ENCODE measurements at regions of chr3 and their contacts with region 1.

Region 1: GRCh38 chr3:31981206-31982181 is at the starts of genes OSBPL10 and ZNF860:
- DNase-seq: peak; percentile 81
- H3K4me3 ChIP-seq: peak within 1 kb of the TSS; percentile 91
- H3K27ac ChIP-seq: peak within 1 kb of the TSS; percentile 88
- H3K4me1 ChIP-seq: peaks cover 72% of the 10 kb centered on the region
- CTCF ChIP-seq: peak; percentile 11; the same call in 1 of the 2 replicates
- total RNA-seq, gene OSBPL10: 58.4 and 65.7 TPM in 2 replicates
- total RNA-seq, gene ZNF860: 13.8 and 20.3 TPM in 2 replicates

Region 2: GRCh38 chr3:31858439-31858838 is 123.1 kb before region 1 on chr3:
- CTCF ChIA-PET with region 1: no interaction called
- POLR2A ChIA-PET with region 1: interaction called, 3 read pairs
- intact Hi-C with region 1: loop called (anchors 2 kb)
- DNase-seq: peak; percentile 74
- H3K4me3 ChIP-seq: no peak overlapping the region
- H3K27ac ChIP-seq: peak overlapping the region; percentile 53
- H3K4me1 ChIP-seq: peaks cover 95% of the 10 kb centered on the region
- CTCF ChIP-seq: peak; percentile 72

Region 3: GRCh38 chr3:31934018-31934417 is 47.5 kb before region 1 on chr3:
- CTCF ChIA-PET with region 1: no interaction called
- POLR2A ChIA-PET with region 1: interaction called, 8 read pairs
- intact Hi-C with region 1: loop called (anchors 2 kb)
- DNase-seq: peak; percentile 66
- H3K4me3 ChIP-seq: peak overlapping the region; percentile 50
- H3K27ac ChIP-seq: peak overlapping the region; percentile 94
- H3K4me1 ChIP-seq: peaks cover 99% of the 10 kb centered on the region
- CTCF ChIP-seq: no peak

Region 4: DNA sequence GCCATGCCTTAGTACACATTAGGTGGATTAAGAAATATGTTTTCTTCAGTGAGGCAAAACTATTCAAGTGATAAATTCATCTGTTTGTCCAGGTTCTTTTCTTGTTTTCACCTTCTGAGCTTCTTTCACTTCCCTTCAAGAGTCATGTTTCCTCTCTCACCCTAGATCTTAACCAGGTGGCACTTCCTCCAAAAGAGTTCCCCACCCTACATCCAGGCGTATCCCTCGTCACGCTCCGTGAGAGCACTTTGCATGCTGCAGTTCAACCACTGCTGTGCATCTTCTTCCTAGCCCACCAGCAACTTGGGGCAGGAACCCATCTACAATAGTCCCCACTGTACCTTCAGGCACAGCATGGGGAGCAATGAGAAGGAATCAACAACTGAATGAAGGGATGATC is 29.3 kb before region 1 on chr3:
- CTCF ChIA-PET with region 1: no interaction called
- POLR2A ChIA-PET with region 1: interaction called, 13 read pairs
- intact Hi-C with region 1: loop called (anchors 1 kb)
- DNase-seq: peak; percentile 99
- H3K4me3 ChIP-seq: peak overlapping the region; percentile 57
- H3K27ac ChIP-seq: peak overlapping the region; percentile 100
- H3K4me1 ChIP-seq: peaks cover 87% of the 10 kb centered on the region
- CTCF ChIP-seq: no peak

Region 5: DNA sequence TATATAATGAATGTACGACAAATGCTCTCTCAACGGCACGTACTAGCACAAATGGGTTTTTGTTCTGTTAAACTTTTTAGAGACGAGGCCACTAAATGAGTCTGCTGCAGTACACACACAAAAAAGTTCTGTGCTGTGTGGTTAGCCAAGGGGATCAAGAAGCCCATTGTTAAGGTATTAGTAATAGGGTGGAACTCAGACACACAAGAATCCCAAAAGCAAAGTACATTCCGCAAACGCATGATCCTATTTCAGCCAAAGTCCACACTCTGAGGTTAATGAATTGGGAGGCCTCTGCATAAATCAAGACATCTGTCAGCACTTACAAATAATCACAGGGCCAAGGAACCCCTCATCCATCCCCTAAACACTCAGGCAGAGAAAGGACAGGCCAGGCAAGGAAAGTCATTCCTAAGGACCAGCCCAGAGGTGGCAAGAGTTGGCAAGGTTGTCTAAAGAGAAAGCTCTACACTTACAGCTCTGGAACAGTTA is 12.5 kb before region 1 on chr3:
- CTCF ChIA-PET with region 1: no interaction called
- POLR2A ChIA-PET with region 1: interaction called, 16 read pairs
- intact Hi-C with region 1: no loop called
- DNase-seq: no peak
- H3K4me3 ChIP-seq: peak overlapping the region; percentile 91
- H3K27ac ChIP-seq: peak overlapping the region; percentile 88
- H3K4me1 ChIP-seq: peaks cover 88% of the 10 kb centered on the region
- CTCF ChIP-seq: no peak

Region 6: GRCh38 chr3:32166654-32167053 is 185.2 kb after region 1 on chr3:
- CTCF ChIA-PET with region 1: no interaction called
- POLR2A ChIA-PET with region 1: no interaction called
- intact Hi-C with region 1: no loop called
- DNase-seq: no peak
- H3K4me3 ChIP-seq: no peak overlapping the region
- H3K27ac ChIP-seq: no peak overlapping the region
- H3K4me1 ChIP-seq: no peaks in the 10 kb centered on the region
- CTCF ChIP-seq: no peak

Measured in OCI-LY7 (cell line).